ENCODE measurements at regions of chr14 and their contacts with region 1.

Region 1: DNA sequence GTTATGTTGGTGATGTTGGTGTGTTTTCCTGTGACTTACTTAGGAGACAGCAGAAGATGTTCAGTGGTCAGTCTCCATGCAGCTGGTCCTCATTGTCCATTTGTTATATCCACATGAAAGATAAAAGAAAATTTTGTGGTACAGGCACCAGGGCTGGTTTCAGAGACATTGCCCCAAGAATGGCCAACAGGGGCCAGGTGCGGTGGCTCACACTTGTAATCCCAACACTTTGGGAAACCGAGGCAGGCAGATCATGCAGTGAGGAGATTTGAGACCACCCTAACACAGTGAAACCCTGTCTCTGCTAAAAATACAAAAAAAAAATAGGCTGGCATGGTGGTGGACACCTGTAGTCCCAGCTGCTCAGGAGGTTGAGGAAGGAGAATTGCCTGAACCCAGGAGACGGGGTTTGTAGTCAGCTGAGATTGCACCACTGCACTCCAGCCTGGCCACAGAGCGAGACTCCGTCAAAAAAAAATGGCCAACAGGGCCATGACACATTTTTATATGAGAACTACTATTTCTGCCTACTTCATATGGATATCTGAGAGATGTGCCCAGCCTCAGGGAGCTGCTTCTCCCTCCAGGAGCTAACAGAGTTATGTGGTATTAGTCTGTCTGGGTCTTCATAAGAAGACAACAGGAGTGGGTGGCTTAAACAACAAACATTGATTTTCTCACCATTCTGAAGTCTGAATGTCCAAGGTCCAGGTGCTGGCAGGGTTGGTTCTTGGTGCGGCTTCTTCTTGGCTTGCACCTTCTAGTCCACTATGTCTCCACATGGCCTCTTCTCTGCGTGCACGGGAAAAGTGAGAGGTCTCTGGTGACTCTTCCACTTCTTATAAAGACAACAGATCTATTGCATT is 821.7 kb downstream of the TMEM121 start:
- H3K4me3 ChIP-seq: no peak overlapping the region
- H3K27ac ChIP-seq: no peak overlapping the region
- H3K4me1 ChIP-seq: no peaks in the 10 kb centered on the region; the same call in 1 of the 2 replicates
- CTCF ChIP-seq: no peak

Region 2: DNA sequence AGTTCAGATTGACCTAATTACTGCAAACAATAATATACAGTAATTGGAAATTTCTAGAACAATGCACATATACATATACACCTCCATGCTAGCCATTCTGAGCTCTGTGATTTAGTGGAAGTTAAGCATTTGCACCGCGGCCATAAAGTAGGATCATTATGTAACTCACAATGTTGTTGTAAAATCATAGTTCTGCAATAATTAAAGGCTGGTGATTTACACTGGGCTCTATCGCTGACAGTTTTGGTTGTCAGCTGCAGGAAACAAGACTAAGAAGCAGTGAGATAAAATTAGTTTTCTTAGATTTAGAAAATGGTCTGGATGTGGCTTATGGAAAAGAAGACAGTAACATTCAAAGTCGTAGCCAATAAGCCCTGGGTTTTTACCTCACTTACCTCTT is 45.5 kb before region 1 on chr14:
- CTCF ChIA-PET with region 1: no interaction called
- POLR2A ChIA-PET with region 1: no interaction called
- H3K4me3 ChIP-seq: no peak overlapping the region
- H3K27ac ChIP-seq: no peak overlapping the region
- H3K4me1 ChIP-seq: no peaks in the 10 kb centered on the region
- CTCF ChIP-seq: no peak

Region 3: DNA sequence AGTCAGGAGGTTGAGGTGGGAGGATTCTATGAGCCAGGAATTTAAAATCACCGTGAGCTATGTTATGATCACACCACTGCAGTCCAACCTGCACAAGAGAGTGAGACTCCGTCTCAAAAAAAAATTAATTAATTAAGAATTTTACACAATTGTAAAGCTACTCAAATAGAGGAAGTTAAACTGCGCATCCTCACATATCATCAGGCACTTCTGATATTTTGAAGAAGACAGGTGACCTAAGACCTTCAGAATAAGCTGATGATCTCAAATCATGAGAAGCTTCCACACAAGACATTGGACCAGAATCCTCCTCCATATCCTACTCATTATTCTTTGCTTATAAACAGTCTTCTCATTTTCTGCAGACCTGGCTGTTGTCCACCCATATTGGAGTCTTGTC is 20.9 kb before region 1 on chr14:
- CTCF ChIA-PET with region 1: interaction called, 40 read pairs
- POLR2A ChIA-PET with region 1: no interaction called
- H3K4me3 ChIP-seq: no peak overlapping the region
- H3K27ac ChIP-seq: no peak overlapping the region
- H3K4me1 ChIP-seq: no peaks in the 10 kb centered on the region
- CTCF ChIP-seq: no peak

Region 4: DNA sequence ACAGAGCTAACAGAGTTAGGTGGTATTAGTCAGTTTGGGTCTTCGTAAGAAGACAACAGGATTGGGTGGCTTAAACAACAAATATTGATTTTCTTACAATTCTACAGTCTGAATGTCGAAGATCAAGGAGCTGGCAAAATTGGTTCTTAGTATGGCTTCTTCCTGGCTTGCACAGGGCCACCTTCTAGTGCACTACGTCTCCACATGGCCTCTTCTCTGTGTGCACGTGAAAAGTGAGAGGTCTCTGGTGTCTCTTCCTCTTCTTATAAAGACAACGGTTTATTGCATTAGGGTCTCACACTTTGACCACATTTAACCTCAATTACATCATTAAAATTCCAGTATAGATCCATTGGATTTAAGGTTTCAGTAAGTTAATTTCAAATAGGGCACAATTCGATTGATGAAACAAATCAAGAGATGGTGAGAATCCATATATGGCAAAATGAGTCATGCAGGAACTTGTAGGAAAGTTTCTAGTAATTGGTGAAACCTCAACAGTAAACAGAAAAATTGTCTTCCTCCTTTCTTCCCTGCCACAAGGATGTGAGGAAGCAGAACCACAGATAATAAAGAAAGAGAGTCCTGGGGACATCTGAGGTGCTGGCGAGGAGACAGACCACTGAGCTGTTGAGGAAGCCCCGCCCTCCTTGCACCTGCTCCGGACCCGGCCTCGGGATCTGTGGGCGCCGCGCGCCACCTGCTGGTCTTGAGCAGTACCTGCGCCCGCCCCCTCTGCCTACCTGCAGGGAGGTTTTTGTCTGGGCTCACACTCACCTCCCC is 24.9 kb after region 1 on chr14:
- CTCF ChIA-PET with region 1: interaction called, 34 read pairs
- POLR2A ChIA-PET with region 1: no interaction called
- H3K4me3 ChIP-seq: no peak overlapping the region
- H3K27ac ChIP-seq: no peak overlapping the region
- H3K4me1 ChIP-seq: no peaks in the 10 kb centered on the region
- CTCF ChIP-seq: peak; percentile 83